Heart right ventricle (tissue), 16 donors: ENCODE measurements at regions of chr20 and their contacts with region 1.

Region 1: DNA sequence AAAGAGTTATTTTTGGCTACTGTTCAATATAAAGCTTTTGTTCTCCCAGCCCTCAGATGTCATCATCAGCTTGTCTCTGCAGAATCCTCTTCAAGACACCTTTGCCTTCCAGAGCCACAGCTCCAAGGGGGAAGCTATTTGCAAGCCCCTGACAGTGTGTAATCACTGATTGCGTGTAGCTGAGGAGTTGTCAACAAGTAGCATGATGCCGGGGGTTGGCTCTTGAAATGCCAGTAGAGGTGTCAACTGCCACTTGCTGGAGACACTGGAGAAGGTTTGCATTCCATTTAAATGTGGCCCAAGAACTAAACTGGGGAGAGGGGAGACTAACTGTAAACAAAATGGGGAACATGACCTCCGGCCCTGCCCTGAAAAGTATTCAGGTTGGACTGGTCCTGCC is 44.3 kb upstream of the PDYN start:
- DNase-seq: no peak
- ATAC-seq: no peak
- H3K4me3 ChIP-seq: no peak overlapping the region
- H3K27ac ChIP-seq: no peak overlapping the region
- H3K4me1 ChIP-seq: no peaks in the 10 kb centered on the region
- H3K27me3 ChIP-seq: peaks cover 0 to 46% (median 23%) of the 10 kb centered on the region in 7 donors
- CTCF ChIP-seq: no peak

Region 2: DNA sequence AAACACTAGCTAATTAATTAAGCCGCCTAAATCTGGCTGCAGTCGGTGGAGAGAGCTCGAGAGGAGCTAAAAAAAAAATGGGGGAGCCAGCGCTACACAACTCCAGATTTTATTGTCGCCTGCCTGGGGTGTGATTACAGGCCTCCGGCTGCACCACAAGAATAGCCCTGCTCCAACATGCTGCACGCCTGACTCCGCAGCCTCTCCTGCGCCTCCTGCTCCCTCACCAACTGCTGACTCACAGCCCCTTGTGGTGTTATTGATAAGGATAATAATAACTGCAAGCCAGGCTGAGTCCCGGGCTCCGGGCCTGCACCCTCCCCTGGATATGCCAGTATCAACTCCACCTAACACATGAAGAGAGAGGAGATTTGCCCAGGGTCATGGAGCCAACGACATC is 126.1 kb before region 1 on chr20:
- intact Hi-C with region 1: no loop called
- DNase-seq: peak; percentile 43 to 61
- ATAC-seq: peak; percentile 63 to 91 (median 84)
- H3K4me3 ChIP-seq: no peak overlapping the region
- H3K27ac ChIP-seq: peak overlapping the region in 8 of 10 donors; percentile 6 to 70 (median 47)
- H3K4me1 ChIP-seq: peaks cover 0 to 45% (median 20%) of the 10 kb centered on the region in 9 donors
- H3K27me3 ChIP-seq: no peaks in the 10 kb centered on the region
- CTCF ChIP-seq: no peak

Region 3: GRCh38 chr20:1987826-1988225 is 50.3 kb before region 1 on chr20:
- intact Hi-C with region 1: loop called in 1 of 10 experiments (anchors 5 kb)
- DNase-seq: no peak
- ATAC-seq: peak in 1 of 8 donors; percentile 50
- H3K4me3 ChIP-seq: no peak overlapping the region
- H3K27ac ChIP-seq: no peak overlapping the region
- H3K4me1 ChIP-seq: no peaks in the 10 kb centered on the region
- H3K27me3 ChIP-seq: peaks cover 0 to 67% (median 54%) of the 10 kb centered on the region in 7 donors
- CTCF ChIP-seq: no peak